ENCODE measurements at regions of chr2 and their contacts with region 1.

Region 1: DNA sequence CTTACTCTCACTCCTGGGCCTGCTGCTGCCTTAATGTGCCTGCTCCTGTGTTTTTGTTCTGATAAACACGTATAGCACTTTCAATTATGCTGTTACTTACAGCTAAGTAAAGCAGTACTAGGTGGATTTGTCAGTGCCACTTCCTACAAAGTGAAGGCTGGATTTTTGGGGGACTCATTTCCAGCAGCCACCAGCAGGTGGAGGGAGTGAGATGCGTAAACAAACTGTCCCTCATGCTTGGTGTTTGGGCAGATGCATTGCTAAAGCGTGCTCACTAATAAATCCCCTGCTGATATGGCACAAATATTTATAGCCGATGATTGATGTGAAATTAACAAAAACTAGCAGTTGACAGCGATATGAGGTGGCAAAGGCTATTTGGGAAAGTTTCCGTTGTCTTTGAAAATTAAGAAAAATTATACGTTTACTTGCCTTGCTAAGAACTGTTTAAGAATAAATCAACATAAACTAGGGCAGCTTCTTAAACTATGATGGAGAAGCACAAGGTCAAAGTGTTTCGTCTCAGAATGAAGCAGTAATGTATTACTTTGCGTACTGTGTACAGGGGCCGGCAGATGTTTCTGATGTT is 101.7 kb downstream of the AGAP1 start:
- DNase-seq: peak; percentile 68
- ATAC-seq: no peak
- H3K4me3 Mint-ChIP-seq: no peak overlapping the region
- H3K27ac Mint-ChIP-seq: no peak overlapping the region
- H3K4me1 Mint-ChIP-seq: no peaks in the 10 kb centered on the region
- H3K27me3 Mint-ChIP-seq: peaks cover 3% of the 10 kb centered on the region
- CTCF ChIP-seq: peak; percentile 65

Region 2: DNA sequence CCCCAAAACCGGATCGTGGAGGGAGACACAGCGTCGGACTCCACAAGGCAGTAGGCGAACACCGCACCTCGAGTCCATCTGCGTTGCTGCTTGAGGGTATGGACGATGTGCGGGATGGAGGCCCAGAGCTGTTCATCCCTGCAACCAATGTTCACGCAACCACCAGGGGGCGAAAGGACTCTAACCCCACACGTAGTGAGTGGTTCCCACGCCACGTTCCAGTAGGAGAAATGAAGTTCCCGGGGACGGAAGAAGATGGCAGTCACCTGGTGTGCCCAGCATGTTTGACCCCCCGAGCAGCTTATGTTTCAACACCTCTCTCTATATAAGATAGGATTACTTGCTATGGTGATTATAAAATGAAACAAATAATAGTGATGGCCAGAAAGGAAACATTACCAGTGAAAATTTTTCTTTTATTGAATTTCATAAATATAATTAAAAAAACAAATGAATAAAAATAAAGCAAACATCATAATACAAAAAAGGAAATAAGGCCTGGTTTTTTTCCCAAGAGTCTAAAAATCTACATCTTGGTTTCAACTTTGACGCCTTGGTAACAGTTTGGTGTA is 459.4 kb before region 1 on chr2:
- CTCF ChIA-PET with region 1: interaction called, 15 read pairs
- POLR2A ChIA-PET with region 1: no interaction called
- intact Hi-C with region 1: loop called (anchors 10 kb)
- DNase-seq: peak; percentile 71
- ATAC-seq: no peak
- H3K4me3 Mint-ChIP-seq: no peak overlapping the region
- H3K27ac Mint-ChIP-seq: no peak overlapping the region
- H3K4me1 Mint-ChIP-seq: no peaks in the 10 kb centered on the region
- H3K27me3 Mint-ChIP-seq: peaks cover 15% of the 10 kb centered on the region
- CTCF ChIP-seq: peak; percentile 79

Region 3: GRCh38 chr2:235746257-235747084 is 151.0 kb after region 1 on chr2:
- CTCF ChIA-PET with region 1: interaction called, 25 read pairs
- POLR2A ChIA-PET with region 1: no interaction called
- intact Hi-C with region 1: loop called (anchors 1 kb)
- DNase-seq: peak; percentile 66
- ATAC-seq: peak; percentile 68
- H3K4me3 Mint-ChIP-seq: no peak overlapping the region
- H3K27ac Mint-ChIP-seq: no peak overlapping the region
- H3K4me1 Mint-ChIP-seq: no peaks in the 10 kb centered on the region
- H3K27me3 Mint-ChIP-seq: peaks cover 2% of the 10 kb centered on the region
- CTCF ChIP-seq: peak; percentile 59

Measured in activated CD8-positive, alpha-beta T cell treated with anti-CD3 and anti-CD28 coated beads for 36 hours (primary cell).